Activated B cell treated with CpG ODN at 0.5 μM for 24 hours (primary cell): ENCODE measurements at regions of chr3 and their contacts with region 1.

Region 1: GRCh38 chr3:189570916-189571315 is 60.3 kb upstream of the TP63 start:
- DNase-seq: no peak
- ATAC-seq: peak; percentile 39
- H3K4me3 Mint-ChIP-seq: no peak overlapping the region
- H3K27ac Mint-ChIP-seq: peak overlapping the region; percentile 6
- H3K4me1 Mint-ChIP-seq: peaks cover 33% of the 10 kb centered on the region
- H3K27me3 Mint-ChIP-seq: no peaks in the 10 kb centered on the region
- CTCF ChIP-seq: no peak

Region 2: DNA sequence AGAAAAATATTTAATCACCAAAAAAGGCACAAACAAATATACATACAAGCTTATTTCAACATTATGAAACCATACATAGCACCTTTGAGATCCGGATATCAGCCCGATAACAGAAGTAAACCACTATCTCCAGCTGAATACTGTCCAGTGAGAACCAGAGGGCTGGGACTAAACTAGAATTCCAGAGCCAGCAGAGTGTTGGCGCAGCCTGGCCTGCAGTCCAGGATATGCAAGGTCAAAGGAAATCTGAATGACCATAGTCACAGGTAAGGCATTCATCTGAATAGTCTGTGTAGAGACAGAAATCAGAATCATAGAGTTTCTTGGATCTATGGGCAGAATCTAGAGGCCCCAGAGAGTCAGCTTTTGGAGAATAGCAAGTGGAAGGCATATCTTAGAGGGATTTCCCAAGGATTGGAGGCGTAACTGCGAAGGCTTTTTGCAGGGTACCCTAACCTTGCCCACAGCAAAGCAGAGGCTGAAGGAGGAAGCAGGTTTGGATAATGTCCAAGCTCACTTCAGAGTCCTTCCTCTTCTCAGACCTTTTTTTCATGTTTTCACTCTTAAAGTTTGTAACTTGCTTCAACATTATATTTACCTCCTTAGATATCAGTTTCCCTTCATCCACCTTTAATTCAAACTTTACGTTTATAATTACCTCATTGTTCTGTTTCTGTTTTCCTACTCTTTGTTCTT is 27.8 kb after region 1 on chr3:
- CTCF ChIA-PET with region 1: no interaction called
- POLR2A ChIA-PET with region 1: no interaction called
- intact Hi-C with region 1: no loop called
- DNase-seq: no peak
- ATAC-seq: no peak
- H3K4me3 Mint-ChIP-seq: no peak overlapping the region
- H3K27ac Mint-ChIP-seq: no peak overlapping the region
- H3K4me1 Mint-ChIP-seq: no peaks in the 10 kb centered on the region
- H3K27me3 Mint-ChIP-seq: no peaks in the 10 kb centered on the region
- CTCF ChIP-seq: no peak

Region 3: DNA sequence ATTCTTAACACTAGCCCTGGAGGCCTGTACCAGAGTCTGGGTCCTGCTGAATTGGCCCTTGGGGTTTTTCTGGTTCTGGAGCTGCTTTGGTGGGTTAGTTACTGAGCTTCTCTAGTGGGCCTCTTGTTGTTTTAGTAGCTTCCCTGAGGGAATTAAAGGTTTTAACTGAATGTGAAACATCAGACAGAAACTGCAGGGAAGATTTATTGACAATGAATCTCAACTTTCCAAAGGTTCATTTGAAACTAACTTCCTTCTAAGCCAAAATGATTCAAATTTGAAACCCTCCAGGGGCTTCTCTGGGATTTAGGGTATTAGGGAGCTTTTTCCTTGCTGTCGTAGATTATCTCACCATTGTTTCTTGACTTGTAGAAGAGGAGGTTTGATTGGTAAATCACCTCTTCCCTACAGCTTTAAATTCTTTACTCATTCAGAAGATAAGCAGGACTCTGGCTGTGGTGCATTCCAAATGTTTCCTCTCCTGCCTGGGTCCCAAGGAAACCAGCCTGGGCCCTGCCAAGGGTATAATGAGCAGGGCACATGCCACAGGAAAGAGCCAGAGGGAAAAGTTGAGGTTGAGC is 131.2 kb after region 1 on chr3:
- CTCF ChIA-PET with region 1: no interaction called
- POLR2A ChIA-PET with region 1: no interaction called
- intact Hi-C with region 1: no loop called
- DNase-seq: no peak
- ATAC-seq: no peak
- H3K4me3 Mint-ChIP-seq: no peak overlapping the region
- H3K27ac Mint-ChIP-seq: no peak overlapping the region
- H3K4me1 Mint-ChIP-seq: no peaks in the 10 kb centered on the region
- H3K27me3 Mint-ChIP-seq: no peaks in the 10 kb centered on the region
- CTCF ChIP-seq: no peak

Region 4: GRCh38 chr3:189824629-189825312 is 253.9 kb after region 1 on chr3:
- CTCF ChIA-PET with region 1: no interaction called
- POLR2A ChIA-PET with region 1: no interaction called
- intact Hi-C with region 1: loop called (anchors 5 kb)
- DNase-seq: no peak
- ATAC-seq: no peak
- H3K4me3 Mint-ChIP-seq: no peak overlapping the region
- H3K27ac Mint-ChIP-seq: no peak overlapping the region
- H3K4me1 Mint-ChIP-seq: no peaks in the 10 kb centered on the region
- H3K27me3 Mint-ChIP-seq: no peaks in the 10 kb centered on the region
- CTCF ChIP-seq: no peak